ENCODE measurements at regions of chr20 and their contacts with region 1.

Region 1: GRCh38 chr20:17504898-17505635 is 26.1 kb downstream of the BFSP1 start:
- DNase-seq: peak; percentile 67
- H3K4me3 Mint-ChIP-seq: peak overlapping the region; percentile 83
- H3K27ac Mint-ChIP-seq: peak overlapping the region; percentile 88
- H3K4me1 Mint-ChIP-seq: peaks cover 42% of the 10 kb centered on the region
- H3K27me3 Mint-ChIP-seq: peaks cover 10% of the 10 kb centered on the region

Region 2: GRCh38 chr20:17530716-17531664 is 25.9 kb after region 1 on chr20 and contains the start of gene BFSP1:
- intact Hi-C with region 1: loop called (anchors 1 kb)
- DNase-seq: peak; percentile 55
- H3K4me3 Mint-ChIP-seq: peak within 1 kb of the TSS; percentile 82
- H3K27ac Mint-ChIP-seq: peak within 1 kb of the TSS; percentile 92
- H3K4me1 Mint-ChIP-seq: peaks cover 22% of the 10 kb centered on the region
- H3K27me3 Mint-ChIP-seq: peaks cover 15% of the 10 kb centered on the region
- total RNA-seq, gene BFSP1: 0.51 and 0.82 TPM in 2 replicates

Region 3: GRCh38 chr20:17569616-17570346 is 64.7 kb after region 1 on chr20 and contains the start of gene DSTN:
- intact Hi-C with region 1: loop called (anchors 2 kb)
- DNase-seq: peak; percentile 85
- H3K4me3 Mint-ChIP-seq: peak within 1 kb of the TSS; percentile 93
- H3K27ac Mint-ChIP-seq: peak within 1 kb of the TSS; percentile 90
- H3K4me1 Mint-ChIP-seq: peaks cover 22% of the 10 kb centered on the region
- H3K27me3 Mint-ChIP-seq: peaks cover 9% of the 10 kb centered on the region
- total RNA-seq, gene DSTN: 61.2 and 64.3 TPM in 2 replicates

Region 4: DNA sequence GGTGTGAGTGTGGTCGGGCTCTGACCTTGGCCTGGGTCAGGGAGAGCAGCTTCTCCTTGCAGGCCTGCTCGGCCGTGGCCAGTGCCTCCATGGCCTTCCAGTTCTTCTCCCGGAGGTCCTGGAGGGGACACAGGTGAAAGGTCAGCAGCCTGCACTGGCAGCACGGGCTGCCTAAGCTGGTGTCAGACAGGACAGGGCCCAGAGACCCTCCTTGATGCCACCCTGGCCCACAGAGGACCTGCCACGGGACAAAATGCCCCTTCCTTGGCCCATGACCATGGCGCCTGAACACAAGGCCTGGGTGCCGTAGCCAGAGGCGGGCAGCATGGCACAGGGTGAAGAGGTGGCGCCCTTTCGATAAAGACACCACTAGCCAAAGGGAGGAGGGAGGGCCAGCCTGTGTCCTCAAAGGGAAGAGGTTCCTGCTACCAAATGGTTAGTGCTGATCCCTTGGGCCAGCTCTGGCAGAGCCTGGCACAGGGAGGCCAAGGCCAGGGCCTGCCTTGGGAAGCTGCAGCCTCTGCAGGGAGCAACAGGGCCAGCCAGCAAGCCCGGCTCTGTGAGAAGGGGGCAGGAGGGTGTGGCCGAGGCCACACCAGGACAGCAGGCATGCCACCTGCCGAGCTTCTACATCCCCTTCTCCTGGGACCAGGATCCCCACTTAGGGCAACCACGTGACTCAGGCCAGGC is 119.6 kb after region 1 on chr20:
- intact Hi-C with region 1: no loop called
- DNase-seq: no peak
- H3K4me3 Mint-ChIP-seq: no peak overlapping the region
- H3K27ac Mint-ChIP-seq: no peak overlapping the region
- H3K4me1 Mint-ChIP-seq: no peaks in the 10 kb centered on the region
- H3K27me3 Mint-ChIP-seq: no peaks in the 10 kb centered on the region

Region 5: GRCh38 chr20:17662333-17663039 is 157.4 kb after region 1 on chr20:
- intact Hi-C with region 1: loop called (anchors 2 kb)
- DNase-seq: no peak
- H3K4me3 Mint-ChIP-seq: no peak overlapping the region
- H3K27ac Mint-ChIP-seq: peak overlapping the region; percentile 61
- H3K4me1 Mint-ChIP-seq: peaks cover 60% of the 10 kb centered on the region
- H3K27me3 Mint-ChIP-seq: no peaks in the 10 kb centered on the region

Region 6: DNA sequence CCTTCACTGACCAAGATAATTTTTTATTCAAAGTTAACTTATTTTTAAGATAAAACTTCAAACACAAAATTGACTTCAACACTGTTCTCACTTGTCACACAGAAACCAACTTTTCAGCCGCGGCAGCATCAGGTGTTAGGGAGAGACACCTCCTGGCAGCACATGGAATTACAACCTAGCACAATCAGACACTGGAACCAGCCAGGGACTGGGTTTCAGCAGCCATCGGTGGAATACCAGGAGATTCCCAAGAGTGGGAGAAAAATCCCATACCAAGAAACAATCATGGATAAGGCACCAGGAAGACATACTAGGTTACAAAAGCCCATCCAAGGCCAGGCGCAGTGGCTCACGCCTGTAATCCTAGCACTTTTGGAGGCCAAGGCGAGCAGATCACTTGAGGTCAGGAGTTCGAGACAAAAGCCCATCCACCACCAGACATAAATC is 393.5 kb after region 1 on chr20:
- intact Hi-C with region 1: loop called (anchors 1 kb)
- DNase-seq: peak; percentile 49
- H3K4me3 Mint-ChIP-seq: no peak overlapping the region
- H3K27ac Mint-ChIP-seq: no peak overlapping the region
- H3K4me1 Mint-ChIP-seq: peaks cover 30% of the 10 kb centered on the region
- H3K27me3 Mint-ChIP-seq: peaks cover 21% of the 10 kb centered on the region

Region 7: GRCh38 chr20:18019070-18019469 is 514.0 kb after region 1 on chr20:
- intact Hi-C with region 1: loop called (anchors 1 kb)
- DNase-seq: no peak
- H3K4me3 Mint-ChIP-seq: no peak overlapping the region
- H3K27ac Mint-ChIP-seq: no peak overlapping the region
- H3K4me1 Mint-ChIP-seq: no peaks in the 10 kb centered on the region
- H3K27me3 Mint-ChIP-seq: peaks cover 2% of the 10 kb centered on the region

Measured in activated T-helper 2 cell treated with anti-CD3 and anti-CD28 coated beads, Interferon-gamma antibody, Interleukin-2, Interleukin-4, amounts not matched to agents 10 μg/mL and 5 μg/mL and 100 μg/mL, durations not matched to agents 14 hours and 24 hours and 36 hours (primary cell).